Activated CD4-positive, alpha-beta T cell treated with anti-CD3 and anti-CD28 coated beads for 36 hours (primary cell): ENCODE measurements at regions of chr2 and their contacts with region 1.

Region 1: DNA sequence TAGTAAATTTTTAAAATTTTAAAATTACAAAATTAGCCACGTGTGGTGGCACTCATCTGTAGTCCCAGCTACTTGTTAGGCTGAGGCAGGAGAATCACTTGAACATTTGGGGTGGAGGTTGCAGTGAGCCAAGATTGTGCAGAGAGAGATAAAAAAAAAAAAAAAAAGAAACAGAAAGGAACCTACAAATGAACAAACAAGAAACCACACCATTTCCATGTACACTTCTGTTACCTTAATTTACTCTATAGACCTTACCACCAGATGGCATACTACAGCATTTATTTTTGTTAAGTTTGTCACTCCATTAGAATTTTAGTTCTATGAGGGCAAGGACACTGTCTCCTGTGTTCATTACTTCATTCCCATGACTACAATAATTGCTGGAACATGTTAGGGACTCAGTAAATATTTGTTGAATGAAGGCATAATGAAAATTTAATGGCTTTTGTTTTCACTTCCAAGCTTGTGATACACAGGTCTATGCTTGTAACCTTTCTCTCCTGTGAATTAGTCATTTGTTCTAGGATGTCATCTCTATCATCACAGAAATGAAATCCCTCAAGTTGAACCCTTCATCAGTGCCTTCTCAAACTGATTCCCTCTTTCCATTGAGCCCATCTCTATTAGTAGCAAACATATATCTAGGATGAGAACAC is 76.0 kb downstream of the ARHGAP15 start:
- DNase-seq: no peak
- ATAC-seq: peak; percentile 83
- H3K4me3 Mint-ChIP-seq: no peak overlapping the region
- H3K27ac Mint-ChIP-seq: peak overlapping the region; percentile 73
- H3K4me1 Mint-ChIP-seq: peaks cover 50% of the 10 kb centered on the region
- H3K27me3 Mint-ChIP-seq: no peaks in the 10 kb centered on the region

Region 2: DNA sequence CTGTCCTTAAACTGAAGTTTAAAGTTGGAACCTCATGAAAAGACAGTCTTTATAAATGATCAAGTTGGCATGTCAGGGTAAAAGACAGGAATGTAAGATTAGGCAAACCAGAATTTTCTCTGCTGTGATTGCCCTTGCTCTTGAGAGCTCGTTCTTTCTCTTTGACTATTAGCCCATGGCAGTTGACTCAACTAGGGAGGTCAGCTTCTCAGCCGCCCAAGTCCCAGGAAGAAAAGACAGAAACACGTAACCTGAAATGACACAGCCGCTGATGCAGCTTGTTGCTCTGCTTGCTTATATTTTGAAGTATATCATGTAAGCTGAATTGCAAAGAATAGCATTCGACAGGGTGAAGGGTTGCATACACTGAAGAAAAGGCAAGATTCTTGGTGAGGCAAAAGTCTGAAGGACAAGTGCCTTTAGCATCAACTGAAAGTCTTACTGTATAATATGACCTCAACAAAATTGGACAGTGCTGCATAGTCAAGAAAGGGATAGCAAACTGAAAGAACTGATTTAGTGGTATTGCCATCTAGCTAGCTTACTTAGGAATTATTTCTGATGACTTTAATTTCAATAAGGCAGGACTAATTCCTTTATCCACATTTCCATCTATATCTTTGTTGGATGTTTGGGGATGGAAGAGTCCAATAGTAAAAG is 21.3 kb before region 1 on chr2:
- CTCF ChIA-PET with region 1: interaction called, 7 read pairs
- POLR2A ChIA-PET with region 1: interaction called, 4 read pairs
- intact Hi-C with region 1: loop called in 1 of 2 experiments (anchors 2 kb)
- DNase-seq: no peak
- ATAC-seq: peak; percentile 30
- H3K4me3 Mint-ChIP-seq: no peak overlapping the region
- H3K27ac Mint-ChIP-seq: no peak overlapping the region
- H3K4me1 Mint-ChIP-seq: peaks cover 45% of the 10 kb centered on the region
- H3K27me3 Mint-ChIP-seq: no peaks in the 10 kb centered on the region

Region 3: GRCh38 chr2:143217512-143218115 is 12.4 kb after region 1 on chr2:
- CTCF ChIA-PET with region 1: interaction called, 35 read pairs
- POLR2A ChIA-PET with region 1: interaction called, 3 read pairs
- intact Hi-C with region 1: loop called in 1 of 2 experiments (anchors 2 kb)
- DNase-seq: no peak
- ATAC-seq: peak; percentile 36
- H3K4me3 Mint-ChIP-seq: no peak overlapping the region
- H3K27ac Mint-ChIP-seq: peak overlapping the region; percentile 40
- H3K4me1 Mint-ChIP-seq: peaks cover 32% of the 10 kb centered on the region
- H3K27me3 Mint-ChIP-seq: no peaks in the 10 kb centered on the region

Region 4: GRCh38 chr2:143223556-143223955 is 18.3 kb after region 1 on chr2:
- CTCF ChIA-PET with region 1: interaction called, 35 read pairs
- POLR2A ChIA-PET with region 1: interaction called, 3 read pairs
- intact Hi-C with region 1: loop called in 1 of 2 experiments (anchors 2 kb)
- DNase-seq: no peak
- ATAC-seq: no peak
- H3K4me3 Mint-ChIP-seq: no peak overlapping the region
- H3K27ac Mint-ChIP-seq: no peak overlapping the region
- H3K4me1 Mint-ChIP-seq: peaks cover 47% of the 10 kb centered on the region
- H3K27me3 Mint-ChIP-seq: no peaks in the 10 kb centered on the region